ENCODE measurements at regions of chr21 and their contacts with region 1.

Region 1: DNA sequence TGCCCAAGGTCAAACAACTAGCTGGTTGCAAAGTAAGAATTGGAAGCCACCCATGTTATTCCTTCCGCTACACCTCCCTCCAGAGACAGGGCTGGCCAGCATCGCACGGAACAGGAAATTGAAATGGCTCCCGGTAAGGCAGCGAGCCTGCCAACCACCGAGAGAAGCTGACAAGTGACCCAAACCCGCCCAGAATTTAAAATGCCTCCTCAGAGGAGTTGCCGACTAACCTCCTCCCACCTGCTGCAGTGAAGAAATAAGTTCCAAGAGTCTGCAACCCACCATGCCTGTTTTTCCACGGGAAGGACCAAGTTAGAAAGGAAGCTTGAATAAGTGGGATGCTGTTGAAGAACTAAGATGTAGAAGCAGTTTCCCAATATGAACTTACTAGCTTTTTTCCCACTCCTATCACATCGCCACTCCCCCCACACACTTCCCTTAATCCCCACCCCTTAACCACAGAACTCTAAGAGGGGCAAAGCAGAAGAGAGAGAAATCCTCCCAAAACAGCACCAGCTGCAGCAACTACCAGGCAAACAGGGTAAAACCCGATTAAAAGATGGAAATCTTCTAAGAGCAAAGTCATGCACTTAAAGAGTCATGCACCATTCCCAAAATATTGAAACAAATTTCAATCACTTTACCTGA is 78.6 kb downstream of the TIAM1 start:
- DNase-seq: peak in 3 of 5 donors; percentile 32 to 62 (median 34)
- ATAC-seq: peak in 3 of 4 donors; percentile 56 to 74 (median 63)
- H3K4me3 ChIP-seq: peak overlapping the region in 3 of 12 donors; percentile 10 to 18 (median 12)
- H3K27ac ChIP-seq: no peak overlapping the region
- H3K4me1 ChIP-seq: peaks cover 0 to 10% (median 0%) of the 10 kb centered on the region in 12 donors
- H3K27me3 ChIP-seq: no peaks in the 10 kb centered on the region
- CTCF ChIP-seq: no peak
- POLR2A ChIP-seq: no peak

Region 2: GRCh38 chr21:31198575-31198974 is 66.9 kb before region 1 on chr21:
- intact Hi-C with region 1: loop called in 1 of 10 experiments (anchors 10 kb)
- DNase-seq: no peak
- ATAC-seq: peak in 3 of 4 donors; percentile 23 to 68 (median 27)
- H3K4me3 ChIP-seq: no peak overlapping the region
- H3K27ac ChIP-seq: no peak overlapping the region
- H3K4me1 ChIP-seq: peaks cover 0 to 22% (median 2%) of the 10 kb centered on the region in 12 donors
- H3K27me3 ChIP-seq: no peaks in the 10 kb centered on the region
- CTCF ChIP-seq: peak; percentile 51 to 77 (median 64)
- POLR2A ChIP-seq: no peak

Measured in heart left ventricle (tissue), 16 donors.